ENCODE measurements at regions of chr1 and their contacts with region 1.

Region 1: DNA sequence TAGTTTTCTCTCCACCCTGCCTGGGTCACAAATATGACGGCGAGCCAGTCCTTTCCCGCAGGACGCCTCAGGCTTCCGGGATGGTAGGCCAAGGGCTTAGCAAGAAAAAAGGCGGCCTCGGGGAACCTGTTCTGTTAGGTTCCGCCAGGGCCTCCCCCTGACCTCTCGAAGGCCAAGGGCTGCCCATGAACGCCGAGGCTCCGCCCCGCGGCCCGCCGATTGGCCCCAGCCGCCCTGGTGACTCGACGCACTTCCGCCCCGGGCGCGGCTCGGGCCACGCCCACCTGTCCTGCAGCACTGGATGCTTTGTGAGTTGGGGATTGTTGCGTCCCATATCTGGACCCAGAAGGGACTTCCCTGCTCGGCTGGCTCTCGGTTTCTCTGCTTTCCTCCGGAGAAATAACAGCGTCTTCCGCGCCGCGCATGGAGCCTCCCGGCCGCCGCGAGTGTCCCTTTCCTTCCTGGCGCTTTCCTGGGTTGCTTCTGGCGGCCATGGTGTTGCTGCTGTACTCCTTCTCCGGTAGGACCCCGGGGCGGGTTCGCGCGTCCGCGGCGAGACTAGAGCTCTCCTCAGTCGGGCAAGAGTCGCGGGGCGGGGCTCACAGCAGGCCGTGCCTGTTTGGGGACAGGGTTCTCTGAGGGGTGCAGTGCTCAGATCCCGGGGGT is at the start of gene CD46:
- DNase-seq: peak; percentile 88 to 96 (median 94)
- H3K4me3 ChIP-seq: peak within 1 kb of the TSS; percentile 66 to 99 (median 93)
- H3K27ac ChIP-seq: peak within 1 kb of the TSS; percentile 49 to 94 (median 88)
- H3K27me3 ChIP-seq: no peaks in the 10 kb centered on the region
- CTCF ChIP-seq: peak in 33 of 56 donors; percentile 12 to 57 (median 31)
- total RNA-seq, gene CD46: 55.7 to 149 (median 97.5) TPM

Region 2: GRCh38 chr1:206797534-206798383 is 954.2 kb before region 1 on chr1:
- intact Hi-C with region 1: no loop called
- DNase-seq: no peak
- H3K4me3 ChIP-seq: no peak overlapping the region
- H3K27ac ChIP-seq: no peak overlapping the region
- H3K27me3 ChIP-seq: peaks cover 0 to 8% (median 0%) of the 10 kb centered on the region in 45 donors
- CTCF ChIP-seq: peak in 18 of 56 donors; percentile 7 to 25 (median 14)

Region 3: DNA sequence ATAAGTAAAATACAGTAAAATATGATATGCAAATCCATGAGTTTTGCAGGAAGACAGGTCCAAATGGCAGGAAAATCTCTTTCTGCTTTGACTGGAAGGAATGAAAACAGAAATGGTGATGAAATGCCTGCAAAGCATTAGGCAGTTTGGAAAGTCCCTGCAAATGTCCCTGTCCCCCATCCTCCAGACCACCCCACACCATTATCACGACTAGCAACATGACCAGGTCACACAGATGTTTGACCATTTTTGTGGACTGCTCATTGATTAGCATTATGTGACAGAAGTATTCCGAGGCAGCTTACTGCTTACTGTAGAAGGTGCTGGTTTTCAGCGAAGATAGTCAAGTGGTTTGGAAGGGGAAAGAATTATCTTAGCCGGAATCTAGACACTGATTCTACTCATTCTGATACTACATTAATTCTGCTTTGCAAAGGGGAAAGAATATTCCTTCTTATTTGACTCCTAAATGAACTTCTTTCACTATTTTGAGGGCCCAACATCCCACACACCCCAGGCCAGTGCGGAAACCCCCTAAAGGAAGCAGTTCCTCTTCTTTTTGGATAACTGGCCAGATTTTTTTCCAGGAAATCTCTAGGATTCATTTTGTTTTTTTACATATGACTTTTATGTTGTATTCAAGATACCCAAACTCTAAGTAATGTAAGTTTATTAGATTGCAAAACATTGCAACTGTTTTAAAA is 307.3 kb before region 1 on chr1:
- intact Hi-C with region 1: no loop called
- DNase-seq: no peak
- H3K4me3 ChIP-seq: no peak overlapping the region
- H3K27ac ChIP-seq: no peak overlapping the region
- H3K27me3 ChIP-seq: peaks cover 0 to 3% (median 0%) of the 10 kb centered on the region in 45 donors
- CTCF ChIP-seq: no peak

Region 4: DNA sequence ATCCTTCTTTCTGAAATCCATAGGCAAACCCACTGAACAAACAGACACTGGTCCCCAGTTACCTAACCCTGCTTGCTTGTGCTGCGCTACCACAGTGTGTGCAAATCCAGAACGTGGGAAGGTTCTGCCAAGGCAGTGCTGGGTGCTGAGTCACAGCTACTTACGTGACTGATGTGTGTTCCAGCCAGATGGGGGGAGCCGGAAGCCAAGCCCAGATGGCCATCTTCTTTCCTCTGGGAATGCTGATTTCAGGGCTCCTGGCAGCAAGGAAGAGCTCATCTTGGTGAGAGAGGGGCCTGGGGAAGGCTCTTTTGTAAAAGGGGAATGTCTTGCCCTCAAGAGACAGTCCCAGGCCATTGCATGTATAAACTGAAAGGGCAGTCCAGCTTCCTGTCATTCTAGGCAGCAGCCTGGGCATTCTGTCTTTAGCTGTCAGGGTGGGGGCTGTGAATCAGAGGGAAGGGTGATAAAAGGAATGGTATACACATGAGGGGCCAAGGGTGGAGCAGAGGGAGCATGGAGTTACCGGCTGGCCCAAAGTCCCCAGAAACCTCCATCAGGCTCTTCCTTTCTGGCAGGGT is 54.0 kb after region 1 on chr1:
- intact Hi-C with region 1: loop called in 1 of 2 experiments (anchors 5 kb)
- DNase-seq: peak in 9 of 10 donors; percentile 53 to 92 (median 83)
- H3K4me3 ChIP-seq: peak overlapping the region in 25 of 59 donors; percentile 1 to 39 (median 17)
- H3K27ac ChIP-seq: peak overlapping the region; percentile 17 to 96 (median 87)
- H3K27me3 ChIP-seq: no peaks in the 10 kb centered on the region
- CTCF ChIP-seq: peak in 1 of 56 donors; percentile 17

Measured in dorsolateral prefrontal cortex (tissue), 120 donors.